RWPE1 (cell line): ENCODE measurements at regions of chr1 and their contacts with region 1.

Region 1: GRCh38 chr1:220164116-220164515 is 70.2 kb downstream of the IARS2 start:
- DNase-seq: no peak
- H3K27ac ChIP-seq: no peak overlapping the region
- CTCF ChIP-seq: no peak

Region 2: DNA sequence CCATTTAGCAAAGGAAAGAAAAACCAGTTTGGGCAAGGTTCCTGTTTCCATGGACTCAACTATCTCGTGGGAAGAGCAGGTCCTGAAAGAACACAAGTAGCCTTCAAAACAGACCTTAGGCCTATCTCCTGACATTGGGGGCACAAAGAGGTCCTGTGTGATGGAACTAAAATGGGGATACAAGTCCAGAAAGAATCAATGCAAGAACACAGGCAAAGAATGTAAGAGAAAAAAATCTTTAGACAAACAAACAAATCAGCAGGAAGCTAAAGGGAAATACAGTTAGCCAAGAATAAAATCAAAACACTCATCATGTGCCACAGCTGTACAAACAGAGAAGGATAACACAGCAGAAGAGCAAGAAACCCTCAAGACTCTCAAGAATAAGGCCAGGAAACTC is 263.9 kb before region 1 on chr1:
- CTCF ChIA-PET with region 1: no interaction called
- POLR2A ChIA-PET with region 1: no interaction called
- DNase-seq: no peak
- H3K27ac ChIP-seq: no peak overlapping the region
- CTCF ChIP-seq: no peak

Region 3: GRCh38 chr1:220113136-220113695 is 50.9 kb before region 1 on chr1:
- CTCF ChIA-PET with region 1: interaction called, 10 read pairs
- POLR2A ChIA-PET with region 1: no interaction called
- DNase-seq: peak; percentile 60
- H3K27ac ChIP-seq: no peak overlapping the region
- CTCF ChIP-seq: peak; percentile 52

Region 4: DNA sequence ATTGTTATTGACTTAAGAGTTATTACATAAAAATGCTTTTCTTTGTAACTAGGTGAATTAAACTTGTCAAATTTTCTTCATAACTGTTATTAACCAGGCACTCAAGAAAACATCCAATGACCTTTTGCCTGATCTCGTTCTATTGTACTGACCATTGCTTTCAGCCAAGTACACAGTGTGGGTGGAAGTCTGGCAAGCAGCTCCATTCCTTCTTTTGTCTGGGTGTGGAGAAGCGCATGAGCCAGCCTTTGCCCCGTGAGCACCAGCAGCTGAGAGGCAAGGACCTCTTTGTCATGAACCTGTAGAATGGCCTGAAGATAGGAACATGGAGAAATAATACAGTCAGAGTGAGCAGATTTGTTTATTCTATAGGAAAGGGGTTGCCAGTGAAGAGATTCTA is 12.7 kb before region 1 on chr1:
- CTCF ChIA-PET with region 1: no interaction called
- POLR2A ChIA-PET with region 1: no interaction called
- DNase-seq: no peak
- H3K27ac ChIP-seq: no peak overlapping the region
- CTCF ChIP-seq: no peak

Region 5: DNA sequence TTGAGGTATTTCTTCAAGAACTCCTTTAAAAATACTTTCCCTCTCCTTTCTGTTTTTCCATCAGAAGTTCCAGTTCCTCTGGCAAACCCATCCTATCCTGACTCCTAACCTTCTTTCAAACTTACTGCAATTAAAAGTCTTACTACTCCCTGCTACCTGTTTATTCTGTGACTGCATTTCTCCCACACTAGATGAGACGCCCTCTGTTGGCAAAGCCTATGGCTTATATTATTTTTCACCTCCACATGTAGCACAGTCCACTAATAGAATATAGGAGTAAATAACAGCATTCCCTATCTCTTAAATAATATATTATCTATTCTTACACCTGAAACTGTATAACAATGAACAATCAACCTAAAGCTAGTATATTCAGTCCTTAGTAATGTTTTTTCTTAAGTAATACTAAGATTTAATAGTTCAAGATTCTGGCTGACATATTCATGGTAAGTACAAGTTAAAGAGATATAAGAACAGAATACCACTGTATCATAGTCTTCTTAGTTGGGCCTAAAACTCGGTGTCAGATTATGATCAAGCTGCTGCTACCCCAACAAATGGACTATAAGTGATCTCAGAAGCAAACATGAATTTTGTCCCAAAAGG is 53.4 kb after region 1 on chr1:
- CTCF ChIA-PET with region 1: no interaction called
- POLR2A ChIA-PET with region 1: no interaction called
- DNase-seq: no peak
- H3K27ac ChIP-seq: no peak overlapping the region
- CTCF ChIP-seq: no peak